ENCODE measurements at regions of chr12 and their contacts with region 1.

Region 1: DNA sequence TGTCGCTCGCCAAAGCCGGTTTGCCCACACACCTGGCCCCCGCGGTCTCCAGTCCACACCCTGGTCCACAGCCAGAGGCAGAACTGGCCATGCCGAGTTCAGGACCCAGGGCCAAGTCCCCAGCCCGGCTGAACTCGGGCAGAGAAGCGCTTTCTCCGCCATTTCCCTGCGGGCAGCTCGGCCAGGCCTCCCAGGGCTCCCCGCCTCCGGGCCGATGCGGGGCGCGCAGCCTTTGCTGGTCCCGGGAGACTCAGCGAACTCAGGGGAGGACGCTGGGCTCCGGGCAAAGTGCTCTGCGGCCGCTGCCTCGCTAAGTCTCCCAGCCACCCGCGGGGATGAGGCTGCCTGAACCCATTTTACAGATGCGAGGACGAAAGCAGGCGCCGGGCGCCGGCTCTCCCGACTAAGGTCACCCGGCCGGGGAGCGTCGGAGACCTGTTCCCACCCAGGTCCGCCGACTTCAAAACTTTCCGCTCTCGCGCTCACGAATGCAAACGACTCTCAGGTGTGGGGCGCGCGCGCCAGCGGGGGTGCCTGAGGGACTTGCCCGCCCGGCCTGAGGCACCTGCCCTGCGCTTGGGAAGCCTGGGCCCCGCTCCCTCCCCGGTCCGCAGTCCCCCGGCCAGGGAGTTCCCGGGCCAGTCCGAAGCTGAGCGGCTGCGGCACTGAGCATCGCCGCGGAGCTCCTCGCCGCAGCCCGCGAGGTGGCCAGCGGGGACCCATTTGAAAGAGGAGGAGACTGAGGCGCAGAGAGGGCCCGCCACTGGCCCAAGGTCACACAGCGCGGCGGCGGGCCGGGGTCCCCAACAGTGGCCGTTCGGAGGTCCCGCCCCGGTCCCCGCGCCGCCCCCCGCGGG is 627 bp downstream of the TESC start:
- DNase-seq: peak; percentile 62
- ATAC-seq: peak; percentile 50
- H3K4me3 Mint-ChIP-seq: peak overlapping the region; percentile 78
- H3K27ac Mint-ChIP-seq: peak overlapping the region; percentile 68
- H3K4me1 Mint-ChIP-seq: peaks cover 27% of the 10 kb centered on the region
- H3K27me3 Mint-ChIP-seq: peaks cover 26% of the 10 kb centered on the region

Region 2: DNA sequence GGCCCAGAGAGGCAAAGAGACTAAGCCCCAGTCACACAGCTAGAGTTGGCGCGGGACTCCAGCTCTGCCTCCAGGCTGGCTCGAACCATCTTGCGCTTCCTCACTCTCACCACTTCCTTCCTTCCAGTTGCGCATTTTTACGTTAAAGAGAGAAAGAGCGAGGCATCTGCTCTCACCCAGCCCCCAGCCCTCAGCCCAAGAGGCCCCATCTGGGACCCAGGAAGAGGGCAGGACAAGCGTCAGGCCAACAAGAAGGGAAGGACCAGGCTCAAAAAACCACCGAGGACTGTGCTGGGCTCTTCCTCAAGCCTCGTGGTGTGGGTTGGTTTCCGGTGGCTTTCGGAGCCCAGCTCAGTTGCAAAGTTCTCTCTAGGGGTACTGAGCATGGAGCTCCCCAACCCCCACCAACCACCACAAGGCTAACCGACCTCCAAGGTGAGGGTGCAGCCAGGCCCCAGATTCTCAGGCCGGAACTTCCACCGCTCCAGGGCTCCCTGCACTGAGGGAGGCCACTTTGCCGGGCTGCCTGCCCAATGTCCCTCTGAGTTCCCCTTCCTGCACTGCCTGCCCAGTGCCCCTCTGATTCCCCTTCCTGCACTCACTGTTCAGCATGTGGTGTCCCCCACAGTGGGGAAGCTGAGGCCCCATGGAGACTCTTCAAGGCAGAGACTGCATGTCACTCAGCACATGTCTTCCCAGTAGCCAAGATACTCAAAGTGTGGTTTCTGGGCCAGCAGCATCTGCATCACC is 35.3 kb before region 1 on chr12:
- CTCF ChIA-PET with region 1: interaction called, 10 read pairs
- DNase-seq: peak; percentile 91
- ATAC-seq: peak; percentile 81
- H3K4me3 Mint-ChIP-seq: peak overlapping the region; percentile 49
- H3K27ac Mint-ChIP-seq: peak overlapping the region; percentile 90
- H3K4me1 Mint-ChIP-seq: peaks cover 57% of the 10 kb centered on the region
- H3K27me3 Mint-ChIP-seq: no peaks in the 10 kb centered on the region